Endothelial cell of umbilical vein (primary cell): ENCODE measurements at regions of chr11 and their contacts with region 1.

Region 1: GRCh38 chr11:17410606-17411379 is 22.3 kb upstream of the KCNJ11 start:
- DNase-seq: peak; percentile 17
- H3K4me3 ChIP-seq: no peak overlapping the region
- H3K27ac ChIP-seq: no peak overlapping the region
- H3K4me1 ChIP-seq: peaks cover 1% of the 10 kb centered on the region
- H3K27me3 ChIP-seq: no peaks in the 10 kb centered on the region
- CTCF ChIP-seq: no peak
- POLR2A ChIP-seq: no peak

Region 2: GRCh38 chr11:17376530-17376929 is 34.3 kb before region 1 on chr11:
- CTCF ChIA-PET with region 1: no interaction called
- POLR2A ChIA-PET with region 1: no interaction called
- dilution Hi-C with region 1: no loop called
- intact Hi-C with region 1: no loop called
- DNase-seq: no peak
- H3K4me3 ChIP-seq: no peak overlapping the region
- H3K27ac ChIP-seq: no peak overlapping the region
- H3K4me1 ChIP-seq: no peaks in the 10 kb centered on the region
- H3K27me3 ChIP-seq: no peaks in the 10 kb centered on the region
- CTCF ChIP-seq: no peak
- POLR2A ChIP-seq: no peak

Region 3: GRCh38 chr11:17542249-17542648 is 131.5 kb after region 1 on chr11:
- CTCF ChIA-PET with region 1: no interaction called
- POLR2A ChIA-PET with region 1: interaction called, 10 read pairs
- dilution Hi-C with region 1: no loop called
- intact Hi-C with region 1: no loop called
- DNase-seq: no peak
- H3K4me3 ChIP-seq: no peak overlapping the region
- H3K27ac ChIP-seq: no peak overlapping the region
- H3K4me1 ChIP-seq: no peaks in the 10 kb centered on the region
- H3K27me3 ChIP-seq: peaks cover 9 to 13% of the 10 kb centered on the region in 2 experiments
- CTCF ChIP-seq: no peak
- POLR2A ChIP-seq: no peak